ENCODE measurements at regions of chr15 and their contacts with region 1.

Region 1: DNA sequence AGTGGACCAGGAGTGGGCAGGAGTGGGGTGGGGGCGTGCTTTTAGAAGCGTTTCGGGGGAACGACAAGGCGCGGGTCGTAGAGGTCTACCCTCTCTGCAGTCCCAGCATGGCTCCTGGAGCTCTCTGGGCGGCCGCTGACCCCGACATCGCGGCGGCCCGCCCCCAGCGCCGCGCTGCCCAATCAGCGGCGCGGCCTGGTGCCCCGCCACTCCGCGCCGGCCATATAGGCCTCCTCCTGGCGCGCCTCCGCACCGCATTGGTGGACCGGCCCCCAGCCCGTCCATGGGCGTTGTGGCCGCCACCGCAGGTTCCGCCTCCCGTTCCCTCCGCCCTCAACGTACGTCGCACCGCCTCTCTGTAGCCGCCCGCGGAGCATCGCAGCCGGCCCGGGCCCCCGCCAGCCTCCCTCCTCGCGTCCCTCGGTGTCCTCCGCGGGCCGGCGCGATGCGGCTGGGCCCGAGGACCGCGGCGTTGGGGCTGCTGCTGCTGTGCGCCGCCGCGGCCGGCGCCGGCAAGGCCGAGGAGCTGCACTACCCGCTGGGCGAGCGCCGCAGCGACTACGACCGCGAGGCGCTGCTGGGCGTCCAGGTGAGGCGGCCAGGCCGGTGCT is at the start of gene RCN2:
- DNase-seq: peak; percentile 95
- ATAC-seq: peak; percentile 99
- H3K4me3 Mint-ChIP-seq: peak within 1 kb of the TSS; percentile 91
- H3K27ac Mint-ChIP-seq: peak within 1 kb of the TSS; percentile 90
- H3K4me1 Mint-ChIP-seq: peaks cover 28% of the 10 kb centered on the region
- H3K27me3 Mint-ChIP-seq: no peaks in the 10 kb centered on the region
- total RNA-seq, gene RCN2: 29.6 TPM

Region 2: DNA sequence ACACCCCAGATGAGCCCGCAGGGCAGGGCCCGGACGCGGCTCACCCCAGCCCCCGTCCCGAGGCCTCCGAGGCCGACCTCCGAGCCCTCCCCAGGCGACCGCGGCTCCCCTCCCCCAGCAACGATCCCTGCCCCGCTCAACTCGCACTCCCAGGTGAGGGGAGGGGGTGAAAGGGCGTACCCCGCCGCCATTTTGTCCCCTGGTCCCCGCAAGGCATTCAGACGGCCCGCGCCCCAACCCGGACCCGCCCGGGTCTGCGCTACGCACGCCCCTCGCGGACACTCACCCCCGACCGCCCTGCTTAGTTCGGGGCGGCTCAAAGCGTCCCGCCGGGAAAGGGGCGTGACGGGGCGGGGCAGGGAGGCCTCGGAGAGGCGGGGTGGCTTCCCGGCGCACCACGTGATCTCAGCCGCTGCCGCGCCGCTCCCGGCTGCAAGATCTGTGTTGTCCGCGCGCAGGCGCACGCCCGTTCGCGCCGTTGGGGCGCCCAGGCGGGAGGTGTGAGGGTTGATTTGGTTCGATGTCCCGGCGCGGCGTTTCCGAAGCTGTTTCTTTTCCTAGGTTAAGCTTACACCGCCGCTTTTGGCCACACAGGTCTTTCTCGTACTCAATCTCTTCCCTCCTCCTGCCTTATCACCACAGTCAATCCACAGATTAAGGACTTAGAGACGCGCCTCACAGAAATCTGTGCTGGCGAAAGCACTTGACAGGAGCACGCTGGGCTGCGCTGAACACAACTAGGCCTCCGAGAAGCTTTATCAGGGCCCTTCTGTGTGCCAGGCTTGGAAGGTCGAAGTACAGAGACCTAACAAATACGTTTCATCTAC is 26.3 kb before region 1 on chr15 and contains the start of gene SCAPER:
- POLR2A ChIA-PET with region 1: interaction called, 15 read pairs
- DNase-seq: peak; percentile 94
- ATAC-seq: peak; percentile 93
- H3K4me3 Mint-ChIP-seq: peak within 1 kb of the TSS; percentile 89
- H3K27ac Mint-ChIP-seq: peak within 1 kb of the TSS; percentile 89
- H3K4me1 Mint-ChIP-seq: peaks cover 28% of the 10 kb centered on the region
- H3K27me3 Mint-ChIP-seq: no peaks in the 10 kb centered on the region
- total RNA-seq, gene SCAPER: 38.0 to 44.8 TPM

Region 3: DNA sequence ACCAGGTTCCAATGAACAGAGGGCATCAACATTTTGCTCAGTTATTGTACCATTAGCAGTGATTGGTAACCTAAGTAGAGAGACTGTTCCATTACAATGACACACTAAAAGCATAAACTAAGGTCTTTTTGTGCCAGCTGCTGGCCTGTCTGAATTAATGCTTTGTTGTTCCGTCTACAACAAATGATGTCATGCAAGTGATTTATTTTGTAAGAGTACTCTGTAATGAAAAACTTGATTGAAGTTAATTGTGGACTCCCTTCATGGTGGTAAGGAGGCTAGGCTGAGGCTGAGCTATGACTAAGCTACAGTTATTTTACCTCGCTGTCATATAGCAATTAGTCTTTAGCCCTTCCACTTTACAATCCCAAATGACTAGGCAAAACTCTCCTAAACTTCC is 23.2 kb after region 1 on chr15:
- POLR2A ChIA-PET with region 1: no interaction called
- DNase-seq: no peak
- ATAC-seq: no peak
- H3K4me3 Mint-ChIP-seq: no peak overlapping the region
- H3K27ac Mint-ChIP-seq: no peak overlapping the region
- H3K4me1 Mint-ChIP-seq: peaks cover 14% of the 10 kb centered on the region
- H3K27me3 Mint-ChIP-seq: peaks cover 4% of the 10 kb centered on the region

Region 4: GRCh38 chr15:77208241-77208640 is 276.7 kb after region 1 on chr15:
- POLR2A ChIA-PET with region 1: no interaction called
- DNase-seq: no peak
- ATAC-seq: no peak
- H3K4me3 Mint-ChIP-seq: no peak overlapping the region
- H3K27ac Mint-ChIP-seq: no peak overlapping the region
- H3K4me1 Mint-ChIP-seq: no peaks in the 10 kb centered on the region
- H3K27me3 Mint-ChIP-seq: no peaks in the 10 kb centered on the region